Activated B cell treated with CpG ODN at 0.5 μM for 24 hours (primary cell): ENCODE measurements at regions of chr7 and their contacts with region 1.

Region 1: DNA sequence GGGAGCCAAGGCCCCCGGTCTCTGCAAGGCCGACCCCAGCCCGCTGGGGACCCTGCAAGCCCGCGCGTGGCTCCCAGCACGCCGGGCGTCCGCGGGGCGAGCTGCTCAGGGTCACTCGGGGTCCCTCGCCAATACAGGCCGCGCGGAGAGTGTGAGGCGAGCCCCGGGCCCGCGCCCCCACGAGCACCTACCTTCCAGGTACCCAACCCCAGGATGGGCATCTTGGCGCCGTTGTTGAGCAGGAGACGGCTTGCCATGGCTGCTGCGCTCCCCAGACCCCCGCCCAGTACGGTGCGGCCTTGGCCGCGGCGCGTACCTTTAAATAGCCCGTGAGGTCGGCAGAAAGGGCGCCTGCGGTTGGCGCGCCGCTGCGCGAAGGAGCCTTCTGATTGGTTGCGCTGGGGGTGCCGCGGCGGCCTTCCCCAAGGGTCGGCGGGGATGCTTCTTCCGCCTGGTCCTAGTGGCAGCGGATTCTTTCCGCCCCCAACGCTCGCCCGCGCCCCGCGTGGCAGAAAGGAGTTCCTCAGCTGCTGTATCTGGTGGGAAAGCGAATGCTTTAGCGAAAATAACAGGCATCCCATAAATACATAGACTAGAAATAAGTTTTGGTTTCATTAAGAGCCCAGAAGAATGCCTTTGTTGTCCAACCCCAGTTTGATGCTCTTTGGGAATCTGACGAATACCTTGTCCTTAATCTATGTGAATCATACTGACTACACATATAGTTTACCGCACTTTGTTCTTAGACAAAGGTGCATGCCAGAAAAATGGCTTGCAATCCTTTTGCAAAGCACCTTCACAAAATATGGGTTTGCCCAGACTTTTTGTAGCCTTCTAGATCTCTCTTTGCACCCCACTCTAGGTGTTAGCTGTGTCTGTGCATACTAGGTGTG is at the start of gene AKR1B1:
- DNase-seq: peak; percentile 85
- ATAC-seq: peak; percentile 88
- H3K4me3 Mint-ChIP-seq: peak within 1 kb of the TSS; percentile 87
- H3K27ac Mint-ChIP-seq: peak within 1 kb of the TSS; percentile 80
- H3K4me1 Mint-ChIP-seq: peaks cover 39% of the 10 kb centered on the region
- H3K27me3 Mint-ChIP-seq: no peaks in the 10 kb centered on the region
- CTCF ChIP-seq: no peak
- total RNA-seq, gene AKR1B1: 88.9 and 91.0 TPM in 2 replicates

Region 2: DNA sequence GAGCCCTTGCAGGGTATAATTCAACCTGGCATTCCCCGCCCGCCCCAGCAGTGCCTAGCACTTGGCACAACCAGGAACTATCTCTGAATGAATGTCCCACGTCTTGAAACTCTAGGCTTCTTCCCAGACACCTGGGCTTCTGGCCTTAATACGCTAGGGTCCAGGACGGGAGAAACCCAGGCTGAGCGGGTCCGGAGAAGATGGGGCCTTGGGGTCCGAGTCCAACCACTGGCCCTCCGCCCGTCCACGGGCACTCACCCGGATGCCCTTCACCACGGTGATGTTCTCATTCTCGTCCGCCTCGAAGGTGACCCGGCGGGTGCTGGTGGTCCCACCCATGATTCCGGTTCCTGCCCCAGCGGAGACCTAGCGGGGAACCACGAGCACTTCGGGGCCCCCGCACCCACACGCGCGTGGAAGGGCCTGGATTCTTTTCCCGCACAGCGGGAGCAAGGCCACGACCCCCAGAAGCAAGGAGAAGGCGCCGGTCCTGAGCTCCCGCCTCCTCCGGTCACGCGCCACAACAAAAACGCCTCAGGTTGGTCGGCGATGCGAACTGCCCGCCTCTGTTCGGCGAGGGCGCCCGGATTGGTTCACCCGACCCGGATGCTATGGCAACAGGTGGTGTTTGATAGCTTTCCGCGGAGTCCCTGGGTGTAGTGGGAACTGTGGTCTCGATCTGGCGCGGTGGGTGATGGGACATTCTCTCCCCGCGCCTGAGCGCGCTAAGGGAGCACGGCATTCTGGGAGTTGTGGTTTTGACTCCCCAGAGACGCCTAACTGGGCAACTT is 1377.3 kb before region 1 on chr7 and contains the start of gene CHCHD3:
- CTCF ChIA-PET with region 1: no interaction called
- POLR2A ChIA-PET with region 1: no interaction called
- intact Hi-C with region 1: loop called (anchors 10 kb)
- DNase-seq: peak; percentile 91
- ATAC-seq: peak; percentile 98
- H3K4me3 Mint-ChIP-seq: peak within 1 kb of the TSS; percentile 94
- H3K27ac Mint-ChIP-seq: peak within 1 kb of the TSS; percentile 94
- H3K4me1 Mint-ChIP-seq: peaks cover 30% of the 10 kb centered on the region
- H3K27me3 Mint-ChIP-seq: no peaks in the 10 kb centered on the region
- CTCF ChIP-seq: no peak
- total RNA-seq, gene CHCHD3: 53.6 and 56.3 TPM in 2 replicates

Region 3: GRCh38 chr7:134058980-134059379 is 400.1 kb before region 1 on chr7:
- CTCF ChIA-PET with region 1: no interaction called
- POLR2A ChIA-PET with region 1: no interaction called
- intact Hi-C with region 1: no loop called
- DNase-seq: no peak
- ATAC-seq: no peak
- H3K4me3 Mint-ChIP-seq: no peak overlapping the region
- H3K27ac Mint-ChIP-seq: no peak overlapping the region
- H3K4me1 Mint-ChIP-seq: no peaks in the 10 kb centered on the region
- H3K27me3 Mint-ChIP-seq: no peaks in the 10 kb centered on the region
- CTCF ChIP-seq: no peak

Region 4: GRCh38 chr7:134316539-134317344 is 142.3 kb before region 1 on chr7 and contains the start of gene SLC35B4:
- CTCF ChIA-PET with region 1: no interaction called
- POLR2A ChIA-PET with region 1: interaction called, 9 read pairs
- intact Hi-C with region 1: loop called (anchors 1 kb)
- DNase-seq: peak; percentile 89
- ATAC-seq: peak; percentile 97
- H3K4me3 Mint-ChIP-seq: peak within 1 kb of the TSS; percentile 94
- H3K27ac Mint-ChIP-seq: peak within 1 kb of the TSS; percentile 87
- H3K4me1 Mint-ChIP-seq: peaks cover 14% of the 10 kb centered on the region
- H3K27me3 Mint-ChIP-seq: peaks cover 4% of the 10 kb centered on the region
- CTCF ChIP-seq: no peak
- total RNA-seq, gene SLC35B4: 17.1 and 22.0 TPM in 2 replicates

Region 5: GRCh38 chr7:134495546-134495945 is 36.5 kb after region 1 on chr7:
- CTCF ChIA-PET with region 1: no interaction called
- POLR2A ChIA-PET with region 1: no interaction called
- intact Hi-C with region 1: loop called (anchors 2 kb)
- DNase-seq: no peak
- ATAC-seq: no peak
- H3K4me3 Mint-ChIP-seq: no peak overlapping the region
- H3K27ac Mint-ChIP-seq: no peak overlapping the region
- H3K4me1 Mint-ChIP-seq: no peaks in the 10 kb centered on the region
- H3K27me3 Mint-ChIP-seq: peaks cover 9% of the 10 kb centered on the region
- CTCF ChIP-seq: no peak

Region 6: GRCh38 chr7:134986363-134987251 is 527.6 kb after region 1 on chr7 and contains the start of gene AGBL3:
- CTCF ChIA-PET with region 1: no interaction called
- POLR2A ChIA-PET with region 1: no interaction called
- intact Hi-C with region 1: loop called (anchors 5 kb)
- DNase-seq: peak; percentile 86
- ATAC-seq: peak; percentile 89
- H3K4me3 Mint-ChIP-seq: peak within 1 kb of the TSS; percentile 99
- H3K27ac Mint-ChIP-seq: peak within 1 kb of the TSS; percentile 99
- H3K4me1 Mint-ChIP-seq: peaks cover 26% of the 10 kb centered on the region
- H3K27me3 Mint-ChIP-seq: no peaks in the 10 kb centered on the region
- CTCF ChIP-seq: peak; percentile 63
- total RNA-seq, gene AGBL3: 6.1 and 9.6 TPM in 2 replicates

Region 7: GRCh38 chr7:135509903-135510602 is 1051.0 kb after region 1 on chr7 and contains the start of gene CNOT4:
- CTCF ChIA-PET with region 1: no interaction called
- POLR2A ChIA-PET with region 1: no interaction called
- intact Hi-C with region 1: loop called (anchors 5 kb)
- DNase-seq: peak; percentile 87
- ATAC-seq: peak; percentile 96
- H3K4me3 Mint-ChIP-seq: no peak within 1 kb of the TSS
- H3K27ac Mint-ChIP-seq: no peak within 1 kb of the TSS
- H3K4me1 Mint-ChIP-seq: peaks cover 10% of the 10 kb centered on the region
- H3K27me3 Mint-ChIP-seq: no peaks in the 10 kb centered on the region
- CTCF ChIP-seq: no peak
- total RNA-seq, gene CNOT4: 34.4 and 36.8 TPM in 2 replicates

Region 8: GRCh38 chr7:135977007-135977741 is 1518.1 kb after region 1 on chr7 and contains the start of gene MTPN:
- CTCF ChIA-PET with region 1: no interaction called
- POLR2A ChIA-PET with region 1: no interaction called
- intact Hi-C with region 1: loop called (anchors 10 kb)
- DNase-seq: peak; percentile 92
- ATAC-seq: peak; percentile 75
- H3K4me3 Mint-ChIP-seq: peak within 1 kb of the TSS; percentile 99
- H3K27ac Mint-ChIP-seq: peak within 1 kb of the TSS; percentile 99
- H3K4me1 Mint-ChIP-seq: peaks cover 89% of the 10 kb centered on the region
- H3K27me3 Mint-ChIP-seq: no peaks in the 10 kb centered on the region
- CTCF ChIP-seq: no peak
- total RNA-seq, gene MTPN: 130 and 137 TPM in 2 replicates